Mammary epithelial cell (primary cell): ENCODE measurements at regions of chr13 and their contacts with region 1.

Region 1: GRCh38 chr13:23888658-23889614 is at the start of gene MIPEP:
- DNase-seq: peak; percentile 96
- H3K4me3 ChIP-seq: peak within 1 kb of the TSS; percentile 54 to 97 (median 73)
- H3K27ac ChIP-seq: peak within 1 kb of the TSS; percentile 86
- H3K4me1 ChIP-seq: peaks cover 13% of the 10 kb centered on the region
- H3K27me3 ChIP-seq: no peaks in the 10 kb centered on the region
- CTCF ChIP-seq: peak; percentile 58 to 73
- total RNA-seq, gene MIPEP: 24.2 to 32.2 TPM

Region 2: GRCh38 chr13:23375001-23375971 is 513.6 kb before region 1 on chr13:
- CTCF ChIA-PET with region 1: no interaction called
- dilution Hi-C with region 1: no loop called
- in situ Hi-C with region 1: no loop called
- intact Hi-C with region 1: loop called (anchors 5 kb)
- DNase-seq: peak; percentile 87
- H3K4me3 ChIP-seq: peak overlapping the region; percentile 64 to 94 (median 90)
- H3K27ac ChIP-seq: peak overlapping the region; percentile 20
- H3K4me1 ChIP-seq: peaks cover 33% of the 10 kb centered on the region
- H3K27me3 ChIP-seq: no peaks in the 10 kb centered on the region
- CTCF ChIP-seq: no peak

Region 3: DNA sequence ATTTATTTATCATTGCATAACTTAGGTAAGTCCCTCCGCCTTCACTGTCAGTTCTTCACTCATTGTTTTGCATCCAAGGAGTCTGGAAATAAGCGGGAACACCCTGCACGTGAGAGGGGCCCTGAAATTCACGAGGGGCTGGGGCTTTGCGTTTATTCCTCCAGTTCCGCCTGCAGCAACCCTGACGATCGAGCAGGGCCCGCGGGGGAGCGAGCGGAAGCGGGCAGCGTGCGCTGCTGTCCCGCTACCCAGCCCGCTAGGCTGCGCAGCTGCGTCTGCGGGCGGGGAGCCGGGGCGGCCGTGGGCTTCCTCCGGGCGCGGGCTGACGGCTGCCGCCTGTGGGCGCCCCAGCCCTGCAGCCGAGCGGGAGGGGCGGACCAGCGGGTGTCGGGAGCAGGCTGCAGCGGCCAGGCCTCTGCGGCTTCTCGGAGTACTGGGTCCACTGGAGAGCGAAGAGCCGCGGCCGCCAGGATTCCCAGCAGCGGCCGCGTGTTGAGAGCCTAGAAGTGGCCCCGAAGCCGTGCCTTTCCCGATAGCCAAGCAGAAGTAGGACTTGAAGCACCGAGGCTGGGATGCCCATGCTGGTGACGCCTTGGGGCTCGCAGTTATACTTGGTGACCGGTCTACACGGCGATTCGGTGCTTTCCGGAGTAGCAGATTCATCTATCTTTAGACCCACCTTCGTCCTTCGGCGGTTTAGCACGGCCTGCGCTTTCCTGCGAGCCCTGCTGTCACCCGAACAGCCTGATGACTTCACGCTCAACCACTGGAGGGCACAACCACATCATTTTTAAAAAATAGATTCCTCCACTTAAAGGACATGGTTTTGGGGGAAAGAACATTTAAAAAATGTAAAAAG is 422.6 kb before region 1 on chr13:
- CTCF ChIA-PET with region 1: interaction called, 8 read pairs
- dilution Hi-C with region 1: no loop called
- in situ Hi-C with region 1: loop called in 1 of 2 experiments (anchors 25 kb)
- intact Hi-C with region 1: loop called (anchors 5 kb)
- DNase-seq: peak; percentile 75
- H3K4me3 ChIP-seq: peak overlapping the region; percentile 40 to 48 (median 45)
- H3K27ac ChIP-seq: no peak overlapping the region
- H3K4me1 ChIP-seq: peaks cover 9% of the 10 kb centered on the region
- H3K27me3 ChIP-seq: peaks cover 6% of the 10 kb centered on the region
- CTCF ChIP-seq: peak; percentile 44 to 59

Region 4: GRCh38 chr13:23715762-23716235 is 173.1 kb before region 1 on chr13:
- CTCF ChIA-PET with region 1: no interaction called
- dilution Hi-C with region 1: no loop called
- in situ Hi-C with region 1: no loop called
- intact Hi-C with region 1: loop called (anchors 5 kb)
- DNase-seq: no peak
- H3K4me3 ChIP-seq: no peak overlapping the region
- H3K27ac ChIP-seq: no peak overlapping the region
- H3K4me1 ChIP-seq: no peaks in the 10 kb centered on the region
- H3K27me3 ChIP-seq: no peaks in the 10 kb centered on the region
- CTCF ChIP-seq: peak in 1 of 2 donors; percentile 48

Region 5: DNA sequence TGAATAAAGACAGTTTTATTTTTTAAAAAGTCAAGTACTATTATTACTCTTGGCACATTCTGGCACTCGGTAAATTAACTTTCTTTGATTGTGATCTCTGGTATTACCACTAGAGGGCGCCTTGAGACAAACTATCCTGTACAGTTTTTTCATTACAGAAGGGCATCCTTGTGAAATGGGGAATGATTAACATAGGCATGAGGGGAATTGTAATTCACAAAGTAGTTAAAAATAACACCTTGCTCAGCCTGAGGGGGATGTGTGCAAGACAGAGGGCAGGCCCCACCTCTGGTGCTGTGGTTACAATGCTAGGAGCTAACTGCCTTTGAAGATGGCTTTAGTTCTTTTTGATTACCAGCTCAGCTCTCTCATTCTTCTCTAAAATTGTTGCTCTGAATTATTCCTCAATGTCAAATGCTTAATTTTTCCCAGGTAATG is 32.5 kb after region 1 on chr13:
- CTCF ChIA-PET with region 1: no interaction called
- dilution Hi-C with region 1: no loop called
- in situ Hi-C with region 1: no loop called
- intact Hi-C with region 1: no loop called
- DNase-seq: peak; percentile 55
- H3K4me3 ChIP-seq: no peak overlapping the region
- H3K27ac ChIP-seq: no peak overlapping the region
- H3K4me1 ChIP-seq: peaks cover 4% of the 10 kb centered on the region
- H3K27me3 ChIP-seq: no peaks in the 10 kb centered on the region
- CTCF ChIP-seq: peak; percentile 55 to 73